SK-N-SH (cell line): ENCODE measurements at regions of chr7 and their contacts with region 1.

Region 1: GRCh38 chr7:134016223-134016941 is 110.8 kb upstream of the LRGUK start:
- DNase-seq: peak; percentile 67
- H3K4me3 ChIP-seq: peak overlapping the region in 1 of 2 experiments; percentile 17; a peak in 1 of 4 replicates
- H3K27ac ChIP-seq: peak overlapping the region in 1 of 2 experiments; percentile 95; a peak in 2 of 4 replicates
- H3K4me1 ChIP-seq: peaks cover 0 to 25% of the 10 kb centered on the region in 2 experiments; a peak in 2 of 4 replicates
- H3K27me3 ChIP-seq: no peaks in the 10 kb centered on the region
- CTCF ChIP-seq: peak; percentile 95
- EP300 ChIP-seq: peak in 1 of 2 experiments; percentile 55; a peak in 1 of 4 replicates
- RAD21 ChIP-seq: peak; percentile 99

Region 2: DNA sequence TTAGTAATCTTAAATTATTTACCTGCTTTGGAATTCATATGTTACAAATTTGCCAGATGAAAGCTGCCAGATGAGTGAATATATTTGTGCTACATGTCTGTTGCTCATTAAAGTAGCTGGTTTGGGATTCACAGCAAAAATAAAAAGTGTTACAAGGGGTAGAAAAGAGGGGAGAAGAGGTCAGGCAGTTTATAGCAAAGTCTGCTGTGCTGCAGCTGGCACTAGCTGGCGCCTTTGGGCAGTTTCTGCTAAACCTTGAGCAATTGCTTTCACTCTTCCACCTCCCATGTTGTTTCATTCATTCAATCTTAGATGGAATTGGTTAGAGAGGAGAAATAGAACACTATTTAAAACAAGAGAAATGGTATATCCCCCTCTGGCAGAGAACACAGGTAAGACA is 293.3 kb before region 1 on chr7:
- CTCF ChIA-PET with region 1: interaction called, 10 read pairs
- POLR2A ChIA-PET with region 1: interaction called, 3 read pairs
- DNase-seq: peak; percentile 49
- H3K4me3 ChIP-seq: no peak overlapping the region
- H3K27ac ChIP-seq: peak overlapping the region in 1 of 2 experiments; percentile 75; a peak in 2 of 4 replicates
- H3K4me1 ChIP-seq: peaks cover 0 to 25% of the 10 kb centered on the region in 2 experiments; a peak in 2 of 4 replicates
- H3K27me3 ChIP-seq: no peaks in the 10 kb centered on the region
- CTCF ChIP-seq: no peak
- EP300 ChIP-seq: no peak
- RAD21 ChIP-seq: peak; percentile 63

Region 3: DNA sequence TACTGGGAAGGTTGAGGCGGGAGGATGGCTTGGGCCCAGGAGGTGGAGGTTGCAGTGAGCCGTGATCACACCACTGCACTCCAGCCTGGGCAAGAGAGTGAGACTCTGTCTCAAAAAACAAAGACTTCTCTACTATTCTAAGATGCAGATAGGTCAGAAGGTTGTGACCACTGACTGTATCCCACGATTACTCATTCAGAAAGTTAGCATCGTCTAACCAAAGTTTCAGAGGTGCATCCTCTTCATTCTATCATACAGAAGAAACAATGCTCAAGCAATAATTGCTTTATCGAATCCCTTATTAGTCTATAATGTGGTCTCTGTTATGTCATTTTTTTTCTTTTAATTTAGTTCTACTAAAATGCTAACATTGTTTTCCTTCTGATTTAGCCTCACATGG is 237.9 kb before region 1 on chr7:
- CTCF ChIA-PET with region 1: interaction called, 29 read pairs
- POLR2A ChIA-PET with region 1: no interaction called
- DNase-seq: no peak
- H3K4me3 ChIP-seq: no peak overlapping the region
- H3K27ac ChIP-seq: peak overlapping the region in 1 of 2 experiments; percentile 100; a peak in 2 of 4 replicates
- H3K4me1 ChIP-seq: peaks cover 0 to 58% of the 10 kb centered on the region in 2 experiments; a peak in 2 of 4 replicates
- H3K27me3 ChIP-seq: no peaks in the 10 kb centered on the region
- CTCF ChIP-seq: no peak
- EP300 ChIP-seq: no peak
- RAD21 ChIP-seq: no peak

Region 4: GRCh38 chr7:133837224-133837623 is 179.2 kb before region 1 on chr7:
- CTCF ChIA-PET with region 1: interaction called, 10 read pairs
- POLR2A ChIA-PET with region 1: no interaction called
- DNase-seq: peak; percentile 57
- H3K4me3 ChIP-seq: no peak overlapping the region
- H3K27ac ChIP-seq: peak overlapping the region; percentile 12 to 100; a peak in 3 of 4 replicates
- H3K4me1 ChIP-seq: peaks cover 0 to 50% of the 10 kb centered on the region in 2 experiments; a peak in 2 of 4 replicates
- H3K27me3 ChIP-seq: no peaks in the 10 kb centered on the region
- CTCF ChIP-seq: no peak
- EP300 ChIP-seq: peak in 1 of 2 experiments; percentile 94; a peak in 2 of 4 replicates
- RAD21 ChIP-seq: peak; percentile 33; the same call in 1 of the 2 replicates

Region 5: GRCh38 chr7:133950855-133951254 is 65.5 kb before region 1 on chr7:
- CTCF ChIA-PET with region 1: interaction called, 12 read pairs
- POLR2A ChIA-PET with region 1: interaction called, 4 read pairs
- DNase-seq: no peak
- H3K4me3 ChIP-seq: no peak overlapping the region
- H3K27ac ChIP-seq: peak overlapping the region in 1 of 2 experiments; percentile 100; a peak in 2 of 4 replicates
- H3K4me1 ChIP-seq: peaks cover 0 to 48% of the 10 kb centered on the region in 2 experiments; a peak in 2 of 4 replicates
- H3K27me3 ChIP-seq: no peaks in the 10 kb centered on the region
- CTCF ChIP-seq: no peak
- EP300 ChIP-seq: no peak
- RAD21 ChIP-seq: no peak

Region 6: DNA sequence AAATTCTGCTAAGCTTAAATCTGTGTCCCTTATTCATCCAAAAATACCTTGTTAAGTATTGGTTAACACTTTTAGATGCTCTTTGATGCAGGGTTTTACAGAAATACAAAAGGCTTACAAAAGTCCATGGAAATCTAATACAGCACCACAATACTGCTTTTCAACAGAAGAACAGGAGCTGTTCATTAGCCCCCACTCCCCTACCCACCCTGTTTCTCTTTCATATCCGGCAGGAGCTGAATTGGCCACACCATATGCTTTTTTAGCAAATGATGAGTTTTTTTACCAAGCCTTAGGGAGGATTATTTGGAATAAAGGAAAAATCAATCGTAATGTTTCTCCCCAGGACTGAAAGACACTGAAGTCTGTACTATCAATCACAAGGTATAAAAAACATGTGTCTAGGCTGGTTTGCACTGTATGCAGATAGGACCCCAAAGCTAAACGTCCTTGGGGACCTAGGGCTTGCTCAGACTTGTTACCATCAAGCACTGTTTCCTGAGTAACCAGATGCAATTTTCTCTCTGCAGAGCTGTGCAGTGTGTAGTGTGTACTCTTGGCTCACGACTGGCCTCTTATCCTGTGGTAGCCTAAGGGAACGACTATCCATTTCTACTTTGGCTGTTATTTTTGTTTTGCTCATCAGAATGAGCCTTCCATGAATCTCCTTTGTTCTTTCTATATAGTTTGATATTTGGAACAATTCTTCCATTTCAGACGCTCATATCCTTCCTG is 32.5 kb before region 1 on chr7:
- CTCF ChIA-PET with region 1: interaction called, 26 read pairs
- POLR2A ChIA-PET with region 1: no interaction called
- DNase-seq: peak; percentile 72
- H3K4me3 ChIP-seq: no peak overlapping the region
- H3K27ac ChIP-seq: peak overlapping the region in 1 of 2 experiments; percentile 100; a peak in 2 of 4 replicates
- H3K4me1 ChIP-seq: peaks cover 0 to 29% of the 10 kb centered on the region in 2 experiments; a peak in 2 of 4 replicates
- H3K27me3 ChIP-seq: no peaks in the 10 kb centered on the region
- CTCF ChIP-seq: no peak
- EP300 ChIP-seq: peak in 1 of 2 experiments; percentile 72; a peak in 2 of 4 replicates
- RAD21 ChIP-seq: peak; percentile 63

Region 7: DNA sequence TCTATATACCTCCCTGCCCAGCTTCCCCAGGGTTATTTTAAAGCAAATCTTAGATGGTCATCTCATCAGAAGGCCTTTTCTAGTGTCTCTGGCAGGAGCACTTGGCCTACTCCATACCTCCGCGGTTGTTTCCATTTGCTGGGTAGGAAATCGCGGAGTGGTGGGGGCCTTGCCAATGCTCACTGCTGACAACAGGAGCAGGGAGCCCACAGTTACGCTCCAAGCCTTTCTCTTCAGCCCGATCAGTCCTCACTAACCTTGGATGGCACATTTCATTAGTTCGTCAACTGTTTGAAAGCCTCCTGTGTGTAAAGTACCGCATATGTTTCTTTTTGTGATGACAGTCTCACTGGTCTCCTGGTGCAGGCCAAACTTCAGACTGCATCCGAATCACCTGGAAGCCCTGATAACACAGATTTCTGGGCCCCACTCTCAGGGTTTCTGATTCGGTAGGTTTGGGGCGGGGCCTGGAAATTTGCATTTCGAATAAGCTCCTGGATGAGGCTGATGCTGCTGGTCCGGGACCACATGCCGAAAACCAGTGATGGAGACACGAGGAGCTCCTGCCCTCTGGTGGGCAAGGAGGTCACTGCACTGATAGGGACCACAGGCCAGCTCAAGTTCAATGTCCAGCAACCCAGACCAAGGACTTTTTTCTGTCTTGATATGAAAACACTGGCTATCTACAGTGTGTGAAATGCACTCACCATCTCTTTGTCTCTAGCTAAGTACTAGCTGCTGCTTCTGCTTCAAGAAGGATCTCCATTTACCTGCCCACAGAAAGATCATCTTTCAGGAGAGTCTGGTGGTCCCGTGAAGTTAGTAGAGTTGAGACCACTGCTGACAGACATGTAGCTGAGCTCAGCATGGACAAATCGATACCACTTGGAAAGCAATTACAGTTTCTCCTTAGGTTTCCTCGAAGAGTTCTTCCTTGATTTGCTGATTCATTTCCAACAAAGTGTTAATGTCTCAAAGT is 124.8 kb after region 1 on chr7:
- CTCF ChIA-PET with region 1: interaction called, 24 read pairs
- POLR2A ChIA-PET with region 1: interaction called, 3 read pairs
- DNase-seq: peak; percentile 86
- H3K4me3 ChIP-seq: no peak overlapping the region
- H3K27ac ChIP-seq: peak overlapping the region in 1 of 2 experiments; percentile 63; a peak in 2 of 4 replicates
- H3K4me1 ChIP-seq: peaks cover 0 to 20% of the 10 kb centered on the region in 2 experiments; a peak in 2 of 4 replicates
- H3K27me3 ChIP-seq: no peaks in the 10 kb centered on the region
- CTCF ChIP-seq: peak; percentile 98
- EP300 ChIP-seq: peak in 1 of 2 experiments; percentile 49; a peak in 1 of 4 replicates
- RAD21 ChIP-seq: peak; percentile 98

Region 8: DNA sequence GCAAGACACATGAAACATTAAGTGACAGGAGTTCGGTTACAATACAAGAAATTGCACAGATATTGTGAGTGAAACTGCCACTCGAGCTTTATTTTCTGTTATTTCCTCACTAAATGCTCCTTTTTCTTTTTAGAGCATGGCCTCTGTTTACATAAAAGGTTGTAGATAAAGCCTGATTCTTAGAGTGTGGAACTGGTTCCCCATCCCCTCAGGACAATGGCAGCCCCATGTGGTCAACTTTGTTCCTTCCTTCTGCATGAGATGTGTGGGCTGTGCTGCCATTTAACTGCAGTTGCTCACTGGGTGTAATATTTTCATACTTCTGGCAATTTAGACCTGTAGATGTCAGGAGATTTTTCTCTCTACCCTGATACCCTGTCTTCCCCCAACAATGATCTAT is 181.0 kb after region 1 on chr7:
- CTCF ChIA-PET with region 1: no interaction called
- POLR2A ChIA-PET with region 1: no interaction called
- DNase-seq: no peak
- H3K4me3 ChIP-seq: no peak overlapping the region
- H3K27ac ChIP-seq: no peak overlapping the region
- H3K4me1 ChIP-seq: peaks cover 0 to 10% of the 10 kb centered on the region in 2 experiments; a peak in 2 of 4 replicates
- H3K27me3 ChIP-seq: no peaks in the 10 kb centered on the region
- CTCF ChIP-seq: no peak
- EP300 ChIP-seq: no peak
- RAD21 ChIP-seq: peak; percentile 13; the same call in 1 of the 2 replicates

Region 9: GRCh38 chr7:134789967-134790685 is 773.7 kb after region 1 on chr7:
- CTCF ChIA-PET with region 1: no interaction called
- POLR2A ChIA-PET with region 1: no interaction called
- DNase-seq: no peak
- H3K4me3 ChIP-seq: 0 out of 4 replicates have a peak overlapping the region, but pooled peaks of 1 of the 2 experiments have one; percentile 1
- H3K27ac ChIP-seq: peak overlapping the region; percentile 60 to 79
- H3K4me1 ChIP-seq: peaks cover 7 to 25% of the 10 kb centered on the region in 2 experiments; a peak in 3 of 4 replicates
- H3K27me3 ChIP-seq: no peaks in the 10 kb centered on the region
- CTCF ChIP-seq: no peak
- EP300 ChIP-seq: no peak
- RAD21 ChIP-seq: no peak